GM13976 (cell line): ENCODE measurements at regions of chr6 and their contacts with region 1.

Region 1: GRCh38 chr6:130885392-130886192 is 58.4 kb downstream of the SMLR1 start:
- DNase-seq: peak; percentile 55
- CTCF ChIP-seq: peak; percentile 84

Region 2: GRCh38 chr6:130620338-130620781 is 265.2 kb before region 1 on chr6:
- in situ Hi-C with region 1: no loop called
- DNase-seq: no peak
- CTCF ChIP-seq: no peak

Region 3: GRCh38 chr6:131107151-131107550 is 221.6 kb after region 1 on chr6:
- in situ Hi-C with region 1: loop called (anchors 5 kb)
- DNase-seq: no peak
- CTCF ChIP-seq: no peak

Region 4: GRCh38 chr6:131532580-131533039 is 647.0 kb after region 1 on chr6:
- in situ Hi-C with region 1: loop called (anchors 10 kb)
- DNase-seq: peak; percentile 41
- CTCF ChIP-seq: no peak